Cardiac septum (tissue), 1 donor: ENCODE measurements at regions of chr1 and their contacts with region 1.

Region 1: DNA sequence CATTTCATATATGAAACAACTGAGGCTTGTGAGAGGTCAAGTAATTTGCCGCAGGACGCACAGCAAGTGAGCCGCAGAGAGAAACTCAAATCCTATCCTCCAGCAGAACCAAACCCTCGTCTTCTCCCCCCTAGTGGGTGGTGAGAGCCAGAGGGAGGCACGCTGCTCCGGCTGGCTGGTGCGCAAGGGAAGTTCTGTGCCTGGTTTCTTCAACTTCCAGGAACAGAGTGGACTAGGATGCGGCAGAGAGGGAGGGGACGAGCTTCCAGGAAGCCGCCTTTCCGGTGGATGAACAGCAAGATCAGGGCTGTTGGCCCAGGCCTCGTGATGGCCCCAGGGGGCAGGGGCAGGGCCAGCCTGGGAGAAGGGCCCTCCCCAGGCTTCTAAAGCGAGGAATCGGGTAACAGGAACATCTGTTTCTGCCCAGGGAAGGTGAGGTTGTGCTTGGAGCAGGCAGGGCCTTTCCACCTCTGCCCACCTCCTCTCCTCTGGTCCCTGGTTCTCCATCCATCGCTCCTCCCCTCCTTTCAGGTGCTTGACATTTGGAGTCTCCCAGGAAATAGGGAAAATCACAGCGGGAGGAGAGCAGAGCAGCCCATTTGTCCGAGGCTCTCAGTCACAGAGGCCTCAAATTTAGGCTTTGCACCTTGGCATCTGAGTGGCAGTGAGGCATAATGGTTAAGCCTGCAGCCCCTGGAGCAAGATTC is 16.8 kb upstream of the PDIK1L start:
- DNase-seq: no peak

Region 2: GRCh38 chr1:26021647-26022403 is 73.0 kb before region 1 on chr1 and contains the start of gene EXTL1:
- intact Hi-C with region 1: loop called (anchors 1 kb)
- DNase-seq: peak; percentile 89
- total RNA-seq, gene EXTL1: 9.2 TPM